ENCODE measurements at regions of chr1 and their contacts with region 1.

Region 1: DNA sequence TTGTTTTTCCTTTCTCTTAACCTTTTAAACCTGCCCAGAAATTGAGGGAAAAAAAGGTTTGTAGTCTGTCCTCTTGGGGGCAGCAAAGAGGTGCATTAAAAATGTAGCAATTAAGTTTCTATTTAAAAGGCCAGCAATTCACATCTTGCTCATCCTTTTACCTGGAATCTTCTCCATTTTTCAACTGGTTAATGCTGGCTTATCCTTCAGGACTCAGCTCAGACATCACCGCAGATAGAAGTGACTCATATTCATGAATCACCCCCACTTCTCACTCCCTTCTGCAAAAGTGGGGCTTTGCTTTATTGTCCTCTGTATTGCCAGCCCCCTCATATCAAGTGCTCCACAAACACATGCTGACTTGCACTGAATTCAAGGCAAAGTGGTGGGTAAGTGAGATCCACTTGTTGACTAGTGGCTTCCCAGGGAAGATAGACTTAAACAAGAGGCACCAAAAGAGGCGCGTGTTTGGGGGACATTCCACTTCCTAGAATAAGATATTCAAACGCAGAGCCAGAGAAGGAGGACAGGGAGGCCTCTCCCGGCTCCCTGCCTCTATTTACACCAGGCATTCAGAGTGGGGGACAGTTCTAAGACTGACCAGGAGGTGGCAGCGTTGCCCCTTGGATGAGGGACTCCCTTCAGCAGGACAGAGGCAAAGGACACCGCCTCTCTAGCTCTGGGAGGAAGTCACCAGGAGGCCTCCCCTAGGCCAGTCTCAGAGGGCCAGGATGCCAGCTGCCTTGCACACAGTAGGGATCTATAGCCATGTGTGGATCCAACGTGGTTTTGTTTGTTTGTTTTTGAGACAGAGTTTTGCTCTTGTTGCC is 23.2 kb upstream of the ZNF648 start:
- DNase-seq: peak; percentile 59 to 82
- H3K4me3 ChIP-seq: no peak overlapping the region
- H3K27ac ChIP-seq: no peak overlapping the region
- H3K4me1 ChIP-seq: peaks cover 30% of the 10 kb centered on the region
- H3K27me3 ChIP-seq: 0 out of 2 replicates have a peak, but pooled peaks cover 3% of the 10 kb centered on the region
- CTCF ChIP-seq: peak; percentile 90

Region 2: DNA sequence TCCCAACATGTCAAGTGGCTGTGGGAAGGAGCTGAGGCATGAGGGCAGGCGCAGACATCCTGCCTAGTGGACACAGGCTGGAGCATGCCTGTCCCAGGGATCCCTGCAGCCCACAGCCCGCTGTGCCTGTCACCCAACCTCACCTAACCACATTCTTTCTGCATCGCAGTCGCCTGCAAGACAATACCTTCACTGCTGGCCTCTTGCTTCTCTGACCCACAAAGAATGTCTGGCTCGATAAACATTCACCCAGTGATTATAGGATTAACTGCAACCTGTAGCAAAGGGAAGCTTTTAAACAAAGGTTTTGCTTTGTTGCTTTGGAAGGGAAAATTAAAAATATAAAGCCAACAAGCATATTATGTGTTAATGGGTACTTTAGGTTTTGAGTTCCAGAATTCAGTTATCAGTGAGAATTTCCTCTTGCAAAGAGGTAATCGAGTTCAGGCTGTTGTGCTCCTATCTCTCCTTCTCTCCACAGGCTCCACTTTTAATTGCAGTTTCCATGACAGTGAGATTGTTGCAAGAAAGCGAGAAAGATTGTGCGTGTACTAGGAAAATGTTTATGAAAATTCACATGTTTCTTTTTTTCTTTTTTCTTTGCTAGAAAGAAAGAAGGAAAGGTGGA is 16.8 kb after region 1 on chr1:
- CTCF ChIA-PET with region 1: interaction called, 6 read pairs
- POLR2A ChIA-PET with region 1: no interaction called
- intact Hi-C with region 1: loop called (anchors 1 kb)
- DNase-seq: peak; percentile 91 to 95
- H3K4me3 ChIP-seq: peak overlapping the region; percentile 0; the same call in 1 of the 2 replicates
- H3K27ac ChIP-seq: peak overlapping the region; percentile 54
- H3K4me1 ChIP-seq: peaks cover 24% of the 10 kb centered on the region
- H3K27me3 ChIP-seq: no peaks in the 10 kb centered on the region
- CTCF ChIP-seq: no peak

Region 3: DNA sequence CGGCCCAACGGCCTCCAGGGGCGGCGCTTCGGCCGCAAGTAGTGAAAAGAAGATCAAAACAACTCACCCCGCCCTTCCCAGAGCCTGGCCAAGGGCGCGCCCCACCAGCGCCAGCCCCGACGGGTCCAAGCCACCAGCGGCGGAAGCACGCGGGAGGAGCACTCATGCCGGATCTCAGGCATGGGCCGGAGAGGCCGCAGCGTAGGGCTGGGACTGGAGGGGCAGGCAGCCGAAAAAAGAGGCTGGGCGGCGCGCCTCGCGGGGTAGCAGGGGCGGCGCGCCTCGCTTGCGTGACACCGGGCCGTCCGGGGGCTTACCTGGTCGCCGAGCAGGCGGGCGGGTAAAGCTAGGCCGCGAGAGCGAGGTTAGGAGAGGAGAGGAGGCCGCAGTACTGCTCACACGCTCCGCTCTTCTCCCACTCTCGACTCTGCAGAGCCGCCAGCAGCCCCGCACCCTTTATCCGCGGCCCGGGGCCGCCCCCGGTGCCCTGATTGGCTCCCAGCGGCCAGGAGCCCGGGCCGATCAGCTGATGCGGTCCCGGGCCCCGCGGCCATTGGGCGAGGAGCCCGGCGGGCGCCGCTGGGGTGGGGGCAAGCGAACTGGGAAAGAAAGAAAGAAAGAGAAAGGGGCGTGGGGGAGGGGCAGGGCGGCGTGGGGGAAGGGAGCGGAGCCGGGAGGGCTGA is 306.8 kb after region 1 on chr1 and contains the start of gene GLUL:
- CTCF ChIA-PET with region 1: interaction called, 16 read pairs
- POLR2A ChIA-PET with region 1: interaction called, 22 read pairs
- intact Hi-C with region 1: loop called (anchors 1 kb)
- DNase-seq: peak; percentile 73 to 89
- H3K4me3 ChIP-seq: peak within 1 kb of the TSS; percentile 68
- H3K27ac ChIP-seq: peak within 1 kb of the TSS; percentile 50; the same call in 1 of the 2 replicates
- H3K4me1 ChIP-seq: peaks cover 23% of the 10 kb centered on the region
- H3K27me3 ChIP-seq: no peaks in the 10 kb centered on the region
- CTCF ChIP-seq: no peak; the same call in 1 of the 2 replicates
- total RNA-seq, gene GLUL: 335 and 348 TPM in 2 replicates

Region 4: DNA sequence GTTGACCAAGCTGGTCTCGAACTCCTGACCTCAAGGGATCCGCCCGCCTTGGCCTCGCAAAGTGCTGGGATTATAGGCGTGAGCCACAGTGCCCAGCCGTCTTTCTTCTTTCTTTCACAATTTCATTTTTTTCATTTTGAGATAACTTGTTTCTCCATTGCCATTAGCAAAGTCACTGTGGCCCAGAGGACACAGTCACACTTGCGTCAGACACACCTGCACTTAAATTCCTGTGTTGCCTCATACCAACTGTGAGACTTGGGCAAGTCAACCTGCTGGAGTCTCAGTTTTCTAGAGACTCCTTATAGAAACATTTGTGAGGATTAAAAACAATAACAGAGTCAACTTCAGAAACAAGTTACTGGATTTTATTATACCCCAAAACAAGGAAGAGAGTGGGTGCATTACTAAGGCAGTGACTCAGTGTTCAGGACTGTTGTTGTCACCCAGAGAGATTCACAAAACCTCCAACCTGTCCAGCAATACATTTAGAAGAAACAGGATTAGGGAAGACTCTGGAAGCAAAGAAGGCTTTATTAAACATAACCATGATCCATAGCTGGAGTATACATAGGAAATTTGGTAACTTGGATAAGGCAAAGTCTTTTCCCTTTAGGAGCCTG is 313.2 kb after region 1 on chr1:
- CTCF ChIA-PET with region 1: interaction called, 16 read pairs
- POLR2A ChIA-PET with region 1: no interaction called
- intact Hi-C with region 1: loop called (anchors 1 kb)
- DNase-seq: peak; percentile 58 to 95
- H3K4me3 ChIP-seq: no peak overlapping the region
- H3K27ac ChIP-seq: peak overlapping the region; percentile 89
- H3K4me1 ChIP-seq: peaks cover 25% of the 10 kb centered on the region
- H3K27me3 ChIP-seq: no peaks in the 10 kb centered on the region
- CTCF ChIP-seq: no peak

Region 5: DNA sequence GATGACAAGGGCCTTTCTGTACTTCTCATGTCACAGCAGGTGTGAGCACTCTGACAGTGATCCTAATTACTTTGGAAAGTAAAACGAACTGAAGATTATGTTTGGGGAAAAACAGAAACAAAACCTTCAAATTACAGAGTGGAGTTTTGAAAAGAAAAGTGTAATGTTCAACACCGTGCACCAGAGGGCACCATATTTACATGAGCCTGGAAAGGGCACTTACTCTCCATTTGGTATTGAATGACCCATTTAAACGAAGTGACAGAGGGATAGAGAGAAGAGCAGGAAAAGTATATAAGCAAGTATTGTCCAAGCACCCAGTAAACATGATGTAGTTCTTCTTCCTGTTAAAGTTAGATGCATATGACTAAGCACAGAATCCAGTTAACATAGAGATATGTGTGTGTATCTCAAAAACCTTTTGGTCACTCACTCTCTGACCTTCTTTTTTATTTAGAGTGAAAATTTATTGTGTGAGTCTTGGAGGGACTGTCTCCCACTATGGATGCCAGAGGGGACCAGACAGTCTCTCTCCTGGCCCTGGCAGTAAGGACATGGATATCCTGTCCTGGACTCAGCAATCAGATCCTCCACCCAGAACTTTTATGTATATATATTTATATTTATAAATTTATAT is 361.4 kb after region 1 on chr1:
- CTCF ChIA-PET with region 1: no interaction called
- POLR2A ChIA-PET with region 1: no interaction called
- intact Hi-C with region 1: loop called (anchors 1 kb)
- DNase-seq: peak; percentile 9 to 48
- H3K4me3 ChIP-seq: no peak overlapping the region
- H3K27ac ChIP-seq: no peak overlapping the region
- H3K4me1 ChIP-seq: no peaks in the 10 kb centered on the region; the same call in 1 of the 2 replicates
- H3K27me3 ChIP-seq: no peaks in the 10 kb centered on the region
- CTCF ChIP-seq: peak; percentile 89

Region 6: GRCh38 chr1:182595641-182596240 is 511.0 kb after region 1 on chr1:
- CTCF ChIA-PET with region 1: no interaction called
- POLR2A ChIA-PET with region 1: no interaction called
- intact Hi-C with region 1: loop called (anchors 2 kb)
- DNase-seq: peak; percentile 40 to 45
- H3K4me3 ChIP-seq: no peak overlapping the region
- H3K27ac ChIP-seq: no peak overlapping the region
- H3K4me1 ChIP-seq: no peaks in the 10 kb centered on the region
- H3K27me3 ChIP-seq: no peaks in the 10 kb centered on the region
- CTCF ChIP-seq: peak; percentile 88

Measured in PC-9 (cell line).